Natural killer cell (primary cell): ENCODE measurements at regions of chr17 and their contacts with region 1.

Region 1: GRCh38 chr17:1331708-1332107 is 52.2 kb downstream of the TRARG1 start:
- DNase-seq: peak in 1 of 2 donors; percentile 48
- ATAC-seq: peak in 1 of 3 donors; percentile 38
- H3K4me3 ChIP-seq: no peak overlapping the region
- H3K4me3 Mint-ChIP-seq: no peak overlapping the region
- H3K27ac ChIP-seq: no peak overlapping the region
- H3K27ac Mint-ChIP-seq: no peak overlapping the region
- H3K4me1 ChIP-seq: peaks cover 3% of the 10 kb centered on the region
- H3K4me1 Mint-ChIP-seq: peaks cover 12% of the 10 kb centered on the region in 2 donors
- H3K27me3 ChIP-seq: peaks cover 2% of the 10 kb centered on the region
- H3K27me3 Mint-ChIP-seq: no peaks in the 10 kb centered on the region
- CTCF ChIP-seq: no peak

Region 2: GRCh38 chr17:1260086-1260769 is 71.5 kb before region 1 on chr17:
- intact Hi-C with region 1: loop called (anchors 1 kb)
- DNase-seq: no peak
- ATAC-seq: no peak
- H3K4me3 ChIP-seq: peak overlapping the region; percentile 35
- H3K4me3 Mint-ChIP-seq: peak overlapping the region; percentile 70
- H3K27ac ChIP-seq: no peak overlapping the region
- H3K27ac Mint-ChIP-seq: no peak overlapping the region
- H3K4me1 ChIP-seq: peaks cover 49% of the 10 kb centered on the region
- H3K4me1 Mint-ChIP-seq: peaks cover 26 to 28% of the 10 kb centered on the region in 2 donors
- H3K27me3 ChIP-seq: no peaks in the 10 kb centered on the region
- H3K27me3 Mint-ChIP-seq: peaks cover 0 to 3% of the 10 kb centered on the region in 2 donors
- CTCF ChIP-seq: no peak

Region 3: DNA sequence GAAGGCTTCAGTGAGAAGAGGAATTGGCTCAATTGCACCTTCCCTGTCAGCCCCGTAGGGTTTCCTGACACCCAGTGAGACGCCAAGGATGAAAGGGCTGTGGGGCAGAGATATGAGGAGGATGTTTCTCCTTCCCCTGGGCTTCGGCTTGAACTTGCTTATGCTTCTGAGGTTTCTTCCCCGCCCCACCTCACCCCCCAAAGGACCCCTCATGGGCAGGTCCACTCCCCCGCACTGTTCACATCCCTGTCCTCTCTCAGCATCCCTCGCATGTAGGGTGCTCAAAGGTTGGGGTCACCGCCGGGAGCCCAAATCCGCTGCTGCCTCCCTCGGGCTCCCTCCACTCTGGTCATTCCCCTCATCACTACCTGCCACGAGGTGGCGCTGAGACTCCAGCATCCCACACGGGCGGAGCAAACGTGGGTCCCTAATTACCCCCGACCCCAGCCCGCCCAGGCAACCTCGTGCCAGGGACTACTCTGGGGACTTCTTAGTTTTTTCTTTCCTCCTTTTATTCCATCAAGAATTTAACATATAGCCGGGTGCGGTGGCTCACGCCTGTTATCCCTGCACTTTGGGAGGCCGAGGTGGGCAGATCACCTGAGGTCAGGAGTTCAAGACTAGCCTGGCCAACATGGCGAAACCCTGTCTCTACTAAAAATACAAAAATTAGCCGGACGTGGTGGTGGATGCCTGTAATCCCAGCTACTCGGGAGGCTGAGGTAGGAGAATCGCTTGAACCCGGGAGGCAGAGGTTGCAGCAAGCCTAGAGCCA is 55.6 kb before region 1 on chr17:
- intact Hi-C with region 1: loop called (anchors 1 kb)
- DNase-seq: peak; percentile 71 to 88
- ATAC-seq: peak; percentile 78 to 95 (median 94)
- H3K4me3 ChIP-seq: no peak overlapping the region
- H3K4me3 Mint-ChIP-seq: peak overlapping the region; percentile 17
- H3K27ac ChIP-seq: no peak overlapping the region
- H3K27ac Mint-ChIP-seq: peak overlapping the region in 1 of 2 donors; percentile 70
- H3K4me1 ChIP-seq: peaks cover 6% of the 10 kb centered on the region
- H3K4me1 Mint-ChIP-seq: peaks cover 0 to 14% of the 10 kb centered on the region in 2 donors
- H3K27me3 ChIP-seq: peaks cover 5% of the 10 kb centered on the region
- H3K27me3 Mint-ChIP-seq: peaks cover 10 to 26% of the 10 kb centered on the region in 2 donors
- CTCF ChIP-seq: peak; percentile 90

Region 4: DNA sequence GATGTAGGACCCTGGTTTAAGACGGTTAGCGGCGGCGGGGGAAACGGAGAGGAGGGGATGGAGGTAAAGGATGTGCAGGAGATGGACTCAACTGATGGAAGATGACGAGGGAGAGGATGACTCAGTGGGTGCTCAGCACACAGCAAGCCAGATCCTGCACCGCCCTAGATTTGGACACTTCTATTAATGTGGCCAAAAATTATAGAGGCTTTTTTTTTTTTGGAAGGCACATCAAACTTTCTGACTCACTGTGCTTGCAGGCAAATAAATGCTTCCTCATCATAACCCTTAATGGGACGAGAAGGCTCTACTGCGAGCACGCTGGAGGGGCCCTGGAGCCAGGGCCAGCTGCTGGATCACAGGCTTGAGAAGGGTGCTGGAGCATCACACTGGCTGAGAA is 657.4 kb after region 1 on chr17:
- intact Hi-C with region 1: no loop called
- DNase-seq: no peak
- ATAC-seq: no peak
- H3K4me3 ChIP-seq: no peak overlapping the region
- H3K4me3 Mint-ChIP-seq: no peak overlapping the region
- H3K27ac ChIP-seq: no peak overlapping the region
- H3K27ac Mint-ChIP-seq: no peak overlapping the region
- H3K4me1 ChIP-seq: no peaks in the 10 kb centered on the region
- H3K4me1 Mint-ChIP-seq: no peaks in the 10 kb centered on the region
- H3K27me3 ChIP-seq: no peaks in the 10 kb centered on the region
- H3K27me3 Mint-ChIP-seq: peaks cover 0 to 17% of the 10 kb centered on the region in 2 donors
- CTCF ChIP-seq: no peak